GM12878 (cell line): ENCODE measurements at regions of chr4 and their contacts with region 1.

Region 1: GRCh38 chr4:168710353-168710946 is 213.6 kb downstream of the PALLD start:
- DNase-seq: no peak
- ATAC-seq: peak; percentile 54
- H3K4me3 ChIP-seq: no peak overlapping the region
- H3K27ac ChIP-seq: no peak overlapping the region
- H3K4me1 ChIP-seq: no peaks in the 10 kb centered on the region
- H3K27me3 ChIP-seq: no peaks in the 10 kb centered on the region; a peak in 1 of 4 replicates
- CTCF ChIP-seq: peak; percentile 9 to 57 (median 26); a peak in 4 of 6 replicates
- EP300 ChIP-seq: no peak
- POLR2A ChIP-seq: no peak
- RAD21 ChIP-seq: peak; percentile 34

Region 2: GRCh38 chr4:167150587-167150986 is 1559.9 kb before region 1 on chr4:
- CTCF ChIA-PET with region 1: no interaction called
- POLR2A ChIA-PET with region 1: no interaction called
- RAD21 ChIA-PET with region 1: no interaction called
- SMC1A ChIA-PET with region 1: no interaction called
- in situ Hi-C with region 1: no loop called
- intact Hi-C with region 1: no loop called
- DNase-seq: no peak
- ATAC-seq: no peak
- H3K4me3 ChIP-seq: no peak overlapping the region
- H3K27ac ChIP-seq: no peak overlapping the region
- H3K4me1 ChIP-seq: no peaks in the 10 kb centered on the region
- H3K27me3 ChIP-seq: no peaks in the 10 kb centered on the region
- CTCF ChIP-seq: no peak
- EP300 ChIP-seq: no peak
- POLR2A ChIP-seq: no peak
- RAD21 ChIP-seq: no peak

Region 3: DNA sequence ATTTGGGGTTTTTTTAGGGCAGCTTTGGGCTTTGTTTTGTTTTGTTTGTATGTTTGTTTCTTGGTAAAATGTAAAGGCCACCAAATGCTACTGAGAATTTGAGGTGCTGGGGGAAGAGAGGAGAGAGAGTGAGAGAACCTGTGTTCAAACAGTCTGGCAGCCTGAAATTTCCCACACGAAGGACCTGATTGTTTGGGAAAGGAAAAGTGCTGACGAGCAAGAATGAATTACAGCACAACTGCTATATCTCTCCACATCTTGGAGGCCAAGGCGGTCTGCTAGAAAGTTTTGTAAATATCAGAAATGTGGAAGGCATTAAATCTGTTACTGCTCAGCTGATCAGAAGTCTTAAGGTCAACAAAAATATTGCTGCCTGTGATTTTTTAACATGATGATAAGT is 43.1 kb before region 1 on chr4:
- CTCF ChIA-PET with region 1: no interaction called
- POLR2A ChIA-PET with region 1: no interaction called
- RAD21 ChIA-PET with region 1: no interaction called
- SMC1A ChIA-PET with region 1: no interaction called
- in situ Hi-C with region 1: no loop called
- intact Hi-C with region 1: no loop called
- DNase-seq: no peak
- ATAC-seq: no peak
- H3K4me3 ChIP-seq: no peak overlapping the region
- H3K27ac ChIP-seq: no peak overlapping the region
- H3K4me1 ChIP-seq: no peaks in the 10 kb centered on the region
- H3K27me3 ChIP-seq: no peaks in the 10 kb centered on the region; a peak in 2 of 4 replicates
- CTCF ChIP-seq: no peak
- EP300 ChIP-seq: no peak
- POLR2A ChIP-seq: no peak
- RAD21 ChIP-seq: no peak

Region 4: DNA sequence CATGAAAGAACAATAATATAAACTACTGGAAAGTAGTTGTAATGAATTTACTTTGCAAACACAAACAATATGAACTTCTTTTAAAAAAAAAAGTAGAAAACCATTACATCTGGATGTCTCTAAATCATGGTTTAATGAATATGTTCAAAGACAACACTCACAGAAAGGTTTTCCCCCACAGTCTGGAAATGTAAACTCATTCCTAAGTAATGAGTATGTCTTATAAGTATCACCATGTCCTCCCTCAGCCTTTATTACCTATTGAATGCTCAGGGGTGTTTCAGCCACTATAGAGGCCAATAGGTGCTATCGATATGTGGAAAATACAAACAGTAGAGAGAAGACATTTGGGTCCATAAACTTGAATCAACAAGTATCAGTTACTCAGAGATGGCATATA is 26.9 kb before region 1 on chr4:
- CTCF ChIA-PET with region 1: interaction called, 6 read pairs
- POLR2A ChIA-PET with region 1: no interaction called
- RAD21 ChIA-PET with region 1: interaction called, 12 read pairs
- SMC1A ChIA-PET with region 1: interaction called, 26 read pairs
- in situ Hi-C with region 1: no loop called
- intact Hi-C with region 1: no loop called
- DNase-seq: no peak
- ATAC-seq: no peak
- H3K4me3 ChIP-seq: no peak overlapping the region
- H3K27ac ChIP-seq: no peak overlapping the region
- H3K4me1 ChIP-seq: no peaks in the 10 kb centered on the region
- H3K27me3 ChIP-seq: no peaks in the 10 kb centered on the region
- CTCF ChIP-seq: no peak
- EP300 ChIP-seq: no peak
- POLR2A ChIP-seq: no peak
- RAD21 ChIP-seq: no peak

Region 5: DNA sequence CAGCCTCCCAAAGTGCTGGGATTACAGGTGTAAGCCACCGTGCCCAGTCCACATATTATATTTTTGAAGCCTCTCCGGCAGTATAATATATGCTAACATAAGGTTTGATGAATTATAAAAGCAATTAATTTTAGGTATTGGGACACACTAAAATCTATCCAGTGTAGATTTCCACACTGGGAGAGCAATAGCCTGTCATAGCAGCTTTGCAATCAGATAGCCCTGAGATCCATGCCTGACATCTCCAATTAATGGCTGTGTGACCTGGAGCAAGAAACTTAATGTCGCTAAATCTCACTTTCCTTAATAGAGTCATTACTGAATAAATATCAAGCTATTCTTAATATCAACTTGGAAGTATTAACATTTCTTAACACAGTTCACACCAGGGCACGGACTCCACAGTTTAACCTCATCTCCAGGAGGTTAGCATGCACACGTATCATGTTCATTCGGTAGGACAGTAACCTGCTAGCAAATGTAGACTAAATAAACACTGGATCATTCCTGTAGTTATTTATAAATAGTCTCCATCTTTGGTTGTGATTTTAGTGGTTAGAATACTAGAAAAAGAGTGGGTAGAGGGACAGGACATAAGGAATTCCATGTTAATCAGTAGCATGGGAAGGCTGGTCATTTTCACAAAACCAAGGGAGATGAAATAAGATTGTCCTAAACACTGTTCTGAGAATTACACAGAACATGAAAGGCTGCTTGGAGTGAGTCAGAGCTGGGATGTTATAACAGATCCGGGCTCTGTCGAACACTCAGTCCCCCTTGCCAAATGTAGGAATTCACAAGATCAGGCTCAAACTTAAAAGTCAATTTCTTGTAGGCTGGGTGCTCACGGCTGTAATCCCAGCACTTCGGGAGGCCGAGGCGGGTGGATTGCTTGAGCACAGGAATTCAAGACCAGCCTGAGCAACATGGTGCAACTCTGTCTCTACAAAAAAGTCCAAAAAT is 41.1 kb after region 1 on chr4:
- CTCF ChIA-PET with region 1: interaction called, 3 read pairs
- POLR2A ChIA-PET with region 1: no interaction called
- RAD21 ChIA-PET with region 1: interaction called, 7 read pairs
- SMC1A ChIA-PET with region 1: interaction called, 10 read pairs
- in situ Hi-C with region 1: no loop called
- intact Hi-C with region 1: no loop called
- DNase-seq: no peak
- ATAC-seq: no peak
- H3K4me3 ChIP-seq: no peak overlapping the region
- H3K27ac ChIP-seq: no peak overlapping the region
- H3K4me1 ChIP-seq: no peaks in the 10 kb centered on the region
- H3K27me3 ChIP-seq: no peaks in the 10 kb centered on the region
- CTCF ChIP-seq: no peak
- EP300 ChIP-seq: no peak
- POLR2A ChIP-seq: no peak
- RAD21 ChIP-seq: no peak

Region 6: DNA sequence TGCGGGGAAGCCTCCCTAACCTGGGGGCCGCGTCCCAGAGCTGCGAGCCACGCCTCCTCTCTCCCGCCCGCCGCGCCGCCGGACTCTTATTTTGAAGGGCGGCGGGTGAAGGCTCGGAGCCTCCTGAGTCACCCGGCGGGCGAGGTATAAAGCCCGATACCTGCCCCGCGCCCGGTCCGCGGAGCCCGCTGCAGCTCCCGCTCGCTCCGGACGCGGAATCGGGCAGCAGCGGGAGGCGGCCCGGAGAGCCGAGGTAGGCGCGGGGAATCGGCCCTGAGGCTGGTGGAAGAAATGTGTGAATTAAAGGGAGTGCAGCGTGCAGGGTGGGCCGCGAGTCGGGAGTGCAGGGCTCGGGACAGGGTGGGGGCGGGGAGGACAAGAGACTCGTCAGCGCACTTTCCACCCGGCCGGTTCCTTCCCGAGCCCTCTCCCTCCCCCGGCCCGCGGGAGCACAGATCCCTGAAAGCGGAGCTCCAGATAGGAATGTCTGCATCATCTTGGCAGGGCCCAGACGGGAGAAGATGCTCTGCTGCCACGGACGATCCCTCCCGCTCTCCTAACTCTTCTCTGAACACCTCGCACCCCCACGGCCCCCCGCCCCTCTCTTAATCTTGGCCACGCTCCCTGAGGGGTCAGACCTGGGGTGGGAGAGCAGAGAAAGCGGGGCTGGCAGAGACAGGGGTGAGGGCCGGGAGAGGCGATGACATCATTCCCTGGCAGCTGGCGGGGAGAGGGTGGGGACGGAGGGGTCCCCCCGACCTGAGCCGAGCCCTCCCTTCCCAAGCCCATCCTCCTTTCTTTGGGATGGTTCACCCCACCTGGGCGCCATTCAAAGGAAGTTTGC is 121.7 kb after region 1 on chr4:
- CTCF ChIA-PET with region 1: interaction called, 21 read pairs
- POLR2A ChIA-PET with region 1: no interaction called
- RAD21 ChIA-PET with region 1: interaction called, 7 read pairs
- SMC1A ChIA-PET with region 1: interaction called, 28 read pairs
- in situ Hi-C with region 1: no loop called
- intact Hi-C with region 1: loop called (anchors 2 kb)
- DNase-seq: no peak
- ATAC-seq: peak; percentile 91
- H3K4me3 ChIP-seq: peak overlapping the region; percentile 59; the same call in 1 of the 2 replicates
- H3K27ac ChIP-seq: no peak overlapping the region
- H3K4me1 ChIP-seq: no peaks in the 10 kb centered on the region
- H3K27me3 ChIP-seq: peaks cover 2 to 14% of the 10 kb centered on the region in 2 experiments; a peak in 3 of 4 replicates
- CTCF ChIP-seq: no peak
- EP300 ChIP-seq: no peak; a peak in 1 of 4 replicates
- POLR2A ChIP-seq: no peak
- RAD21 ChIP-seq: no peak

Region 7: DNA sequence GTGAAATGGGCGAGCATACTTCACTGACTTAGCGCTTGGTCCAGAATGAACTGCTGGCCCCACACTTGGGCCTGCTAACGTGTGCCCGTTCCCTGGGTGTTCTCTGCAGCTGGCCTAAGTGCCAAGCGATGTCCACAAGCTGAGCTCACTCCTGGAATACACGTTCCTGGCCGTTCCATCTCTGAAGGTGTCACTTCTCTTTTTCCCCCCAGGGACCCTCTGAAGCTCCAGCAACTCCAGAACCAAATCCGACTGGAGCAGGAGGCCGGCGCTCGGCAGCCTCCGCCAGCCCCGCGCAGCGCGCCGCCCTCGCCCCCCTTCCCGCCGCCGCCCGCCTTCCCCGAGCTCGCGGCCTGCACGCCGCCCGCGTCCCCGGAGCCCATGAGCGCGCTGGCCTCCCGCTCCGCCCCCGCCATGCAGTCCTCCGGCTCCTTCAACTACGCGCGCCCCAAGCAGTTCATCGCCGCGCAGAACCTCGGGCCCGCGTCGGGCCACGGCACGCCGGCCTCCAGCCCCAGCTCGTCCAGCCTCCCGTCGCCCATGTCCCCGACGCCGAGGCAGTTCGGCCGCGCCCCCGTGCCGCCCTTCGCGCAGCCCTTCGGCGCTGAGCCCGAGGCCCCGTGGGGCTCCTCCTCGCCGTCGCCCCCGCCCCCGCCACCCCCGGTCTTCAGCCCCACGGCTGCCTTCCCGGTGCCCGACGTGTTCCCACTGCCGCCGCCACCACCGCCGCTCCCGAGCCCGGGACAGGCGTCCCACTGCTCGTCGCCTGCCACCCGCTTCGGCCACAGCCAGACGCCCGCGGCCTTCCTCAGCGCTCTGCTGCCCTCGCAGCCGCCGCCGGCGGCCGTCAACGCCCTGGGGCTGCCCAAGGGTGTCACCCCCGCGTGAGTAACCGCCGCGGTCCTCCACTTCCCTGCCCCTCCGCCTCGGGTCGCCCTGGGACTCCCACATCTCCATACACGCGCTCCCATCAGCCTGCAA is 167.4 kb after region 1 on chr4:
- CTCF ChIA-PET with region 1: interaction called, 36 read pairs
- POLR2A ChIA-PET with region 1: no interaction called
- RAD21 ChIA-PET with region 1: interaction called, 4 read pairs
- SMC1A ChIA-PET with region 1: interaction called, 34 read pairs
- in situ Hi-C with region 1: no loop called
- intact Hi-C with region 1: loop called (anchors 2 kb)
- DNase-seq: no peak
- ATAC-seq: peak; percentile 64
- H3K4me3 ChIP-seq: 0 out of 2 replicates have a peak overlapping the region, but pooled peaks have one; percentile 16
- H3K27ac ChIP-seq: no peak overlapping the region
- H3K4me1 ChIP-seq: 0 out of 2 replicates have a peak, but pooled peaks cover 4% of the 10 kb centered on the region
- H3K27me3 ChIP-seq: no peaks in the 10 kb centered on the region
- CTCF ChIP-seq: no peak
- EP300 ChIP-seq: no peak
- POLR2A ChIP-seq: no peak
- RAD21 ChIP-seq: no peak

Region 8: GRCh38 chr4:168923526-168924194 is 213.2 kb after region 1 on chr4:
- CTCF ChIA-PET with region 1: interaction called, 362 read pairs
- POLR2A ChIA-PET with region 1: interaction called, 3 read pairs
- RAD21 ChIA-PET with region 1: interaction called, 116 read pairs
- SMC1A ChIA-PET with region 1: interaction called, 292 read pairs
- in situ Hi-C with region 1: no loop called
- intact Hi-C with region 1: no loop called
- DNase-seq: peak; percentile 31
- ATAC-seq: peak; percentile 91
- H3K4me3 ChIP-seq: no peak overlapping the region
- H3K27ac ChIP-seq: no peak overlapping the region
- H3K4me1 ChIP-seq: no peaks in the 10 kb centered on the region
- H3K27me3 ChIP-seq: no peaks in the 10 kb centered on the region
- CTCF ChIP-seq: peak; percentile 68 to 73 (median 69); a peak in 5 of 6 replicates
- EP300 ChIP-seq: no peak
- POLR2A ChIP-seq: no peak
- RAD21 ChIP-seq: peak; percentile 84